Caco-2 (cell line): ENCODE measurements at regions of chr6 and their contacts with region 1.

Region 1: GRCh38 chr6:127496471-127496870 is 22.7 kb downstream of the MTCL3 start:
- DNase-seq: no peak
- H3K4me3 ChIP-seq: no peak overlapping the region
- H3K4me3 Mint-ChIP-seq: no peak overlapping the region
- H3K27ac Mint-ChIP-seq: no peak overlapping the region
- H3K4me1 ChIP-seq: no peaks in the 10 kb centered on the region
- H3K4me1 Mint-ChIP-seq: no peaks in the 10 kb centered on the region
- H3K27me3 ChIP-seq: no peaks in the 10 kb centered on the region
- H3K27me3 Mint-ChIP-seq: peaks cover 13% of the 10 kb centered on the region
- CTCF ChIP-seq: no peak

Region 2: DNA sequence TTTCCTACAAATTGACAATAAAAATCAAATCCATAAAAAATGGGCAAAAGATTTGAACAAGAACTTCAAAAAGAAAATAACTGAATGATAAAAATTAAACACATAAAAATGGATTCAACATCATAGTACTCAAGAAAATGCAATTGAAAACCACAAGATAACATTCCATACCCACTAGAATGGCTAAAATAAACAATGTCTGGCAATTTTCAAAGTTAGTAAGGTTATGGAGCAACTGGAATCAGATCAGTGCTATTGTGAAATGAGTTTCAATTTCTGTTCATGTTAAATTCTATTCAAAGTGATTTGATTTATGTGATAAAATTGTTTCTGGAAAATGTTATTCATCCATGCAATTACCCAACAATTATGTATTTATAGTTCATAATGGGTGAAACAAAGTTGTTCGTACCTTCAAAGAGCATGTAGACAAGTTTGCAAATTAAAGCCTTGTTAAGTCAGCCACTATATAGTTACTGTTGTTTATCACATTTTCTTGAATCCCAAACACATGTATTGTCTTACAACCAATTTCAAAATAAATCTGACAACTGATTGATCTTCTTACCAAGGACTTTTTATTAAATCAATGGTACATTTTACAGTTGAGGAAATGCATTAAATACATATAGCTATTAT is 1308.1 kb before region 1 on chr6:
- CTCF ChIA-PET with region 1: no interaction called
- POLR2A ChIA-PET with region 1: interaction called, 14 read pairs
- intact Hi-C with region 1: no loop called
- DNase-seq: no peak
- H3K4me3 ChIP-seq: no peak overlapping the region
- H3K4me3 Mint-ChIP-seq: no peak overlapping the region
- H3K27ac Mint-ChIP-seq: no peak overlapping the region
- H3K4me1 ChIP-seq: no peaks in the 10 kb centered on the region
- H3K4me1 Mint-ChIP-seq: no peaks in the 10 kb centered on the region
- H3K27me3 ChIP-seq: no peaks in the 10 kb centered on the region
- H3K27me3 Mint-ChIP-seq: no peaks in the 10 kb centered on the region
- CTCF ChIP-seq: no peak

Region 3: GRCh38 chr6:127554435-127555006 is 58.0 kb after region 1 on chr6:
- CTCF ChIA-PET with region 1: no interaction called
- POLR2A ChIA-PET with region 1: no interaction called
- intact Hi-C with region 1: no loop called
- DNase-seq: peak in 1 of 2 experiments; percentile 24
- H3K4me3 ChIP-seq: no peak overlapping the region
- H3K4me3 Mint-ChIP-seq: no peak overlapping the region
- H3K27ac Mint-ChIP-seq: no peak overlapping the region
- H3K4me1 ChIP-seq: no peaks in the 10 kb centered on the region
- H3K4me1 Mint-ChIP-seq: no peaks in the 10 kb centered on the region
- H3K27me3 ChIP-seq: no peaks in the 10 kb centered on the region
- H3K27me3 Mint-ChIP-seq: peaks cover 4% of the 10 kb centered on the region
- CTCF ChIP-seq: peak; percentile 22 to 44

Region 4: GRCh38 chr6:127608524-127609270 is 112.2 kb after region 1 on chr6:
- CTCF ChIA-PET with region 1: no interaction called
- POLR2A ChIA-PET with region 1: no interaction called
- intact Hi-C with region 1: no loop called
- DNase-seq: no peak
- H3K4me3 ChIP-seq: no peak overlapping the region
- H3K4me3 Mint-ChIP-seq: no peak overlapping the region
- H3K27ac Mint-ChIP-seq: no peak overlapping the region
- H3K4me1 ChIP-seq: no peaks in the 10 kb centered on the region
- H3K4me1 Mint-ChIP-seq: no peaks in the 10 kb centered on the region
- H3K27me3 ChIP-seq: no peaks in the 10 kb centered on the region
- H3K27me3 Mint-ChIP-seq: peaks cover 2% of the 10 kb centered on the region
- CTCF ChIP-seq: no peak